ENCODE measurements at regions of chr15 and their contacts with region 1.

Region 1: DNA sequence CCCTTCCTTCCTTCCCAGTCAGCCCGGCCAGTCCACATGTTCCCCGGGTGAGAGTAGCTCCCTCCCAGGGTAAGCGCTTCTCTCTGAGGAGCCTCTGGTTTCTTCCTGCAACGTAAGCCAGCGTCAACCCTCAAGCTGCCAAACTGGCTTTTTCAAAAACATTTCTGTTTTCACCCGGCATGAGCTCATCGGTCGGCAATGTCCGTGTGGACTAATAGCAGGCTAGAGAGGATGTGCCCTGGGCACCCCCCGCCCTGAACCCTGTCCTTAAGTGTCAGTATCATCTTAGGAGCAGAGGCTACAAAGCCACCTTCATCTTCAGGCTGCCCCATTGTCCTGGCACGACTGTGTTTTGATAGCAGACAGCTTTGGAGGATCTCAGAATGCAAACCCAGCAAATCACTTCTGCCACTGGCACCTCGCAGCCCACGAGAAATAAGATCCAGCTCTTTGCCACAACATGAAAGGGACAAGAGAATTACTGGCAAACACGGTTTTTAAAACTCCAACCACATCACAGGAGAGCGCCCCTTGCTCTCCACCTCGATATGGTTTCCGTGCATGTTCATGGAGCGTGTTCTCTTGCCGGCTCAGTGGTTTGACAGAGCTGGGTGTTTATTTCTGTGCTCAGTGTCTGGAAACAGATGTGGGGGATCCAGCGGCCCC is 9.9 kb downstream of the ALDH1A3 start:
- DNase-seq: no peak
- H3K4me3 ChIP-seq: no peak overlapping the region
- H3K27ac ChIP-seq: no peak overlapping the region
- H3K4me1 ChIP-seq: peaks cover 0 to 7% (median 2%) of the 10 kb centered on the region in 4 experiments; a peak in 2 of 7 replicates
- H3K27me3 ChIP-seq: no peaks in the 10 kb centered on the region; a peak in 1 of 7 replicates
- CTCF ChIP-seq: no peak
- EP300 ChIP-seq: no peak
- POLR2A ChIP-seq: no peak
- RAD21 ChIP-seq: no peak

Region 2: GRCh38 chr15:100902436-100903167 is 13.1 kb after region 1 on chr15:
- CTCF ChIA-PET with region 1: interaction called, 10 read pairs
- POLR2A ChIA-PET with region 1: interaction called, 4 read pairs
- DNase-seq: no peak
- H3K4me3 ChIP-seq: no peak overlapping the region
- H3K27ac ChIP-seq: no peak overlapping the region
- H3K4me1 ChIP-seq: peaks cover 0 to 10% (median 3%) of the 10 kb centered on the region in 4 experiments; a peak in 5 of 7 replicates
- H3K27me3 ChIP-seq: no peaks in the 10 kb centered on the region
- CTCF ChIP-seq: no peak
- EP300 ChIP-seq: no peak
- POLR2A ChIP-seq: no peak
- RAD21 ChIP-seq: no peak

Region 3: DNA sequence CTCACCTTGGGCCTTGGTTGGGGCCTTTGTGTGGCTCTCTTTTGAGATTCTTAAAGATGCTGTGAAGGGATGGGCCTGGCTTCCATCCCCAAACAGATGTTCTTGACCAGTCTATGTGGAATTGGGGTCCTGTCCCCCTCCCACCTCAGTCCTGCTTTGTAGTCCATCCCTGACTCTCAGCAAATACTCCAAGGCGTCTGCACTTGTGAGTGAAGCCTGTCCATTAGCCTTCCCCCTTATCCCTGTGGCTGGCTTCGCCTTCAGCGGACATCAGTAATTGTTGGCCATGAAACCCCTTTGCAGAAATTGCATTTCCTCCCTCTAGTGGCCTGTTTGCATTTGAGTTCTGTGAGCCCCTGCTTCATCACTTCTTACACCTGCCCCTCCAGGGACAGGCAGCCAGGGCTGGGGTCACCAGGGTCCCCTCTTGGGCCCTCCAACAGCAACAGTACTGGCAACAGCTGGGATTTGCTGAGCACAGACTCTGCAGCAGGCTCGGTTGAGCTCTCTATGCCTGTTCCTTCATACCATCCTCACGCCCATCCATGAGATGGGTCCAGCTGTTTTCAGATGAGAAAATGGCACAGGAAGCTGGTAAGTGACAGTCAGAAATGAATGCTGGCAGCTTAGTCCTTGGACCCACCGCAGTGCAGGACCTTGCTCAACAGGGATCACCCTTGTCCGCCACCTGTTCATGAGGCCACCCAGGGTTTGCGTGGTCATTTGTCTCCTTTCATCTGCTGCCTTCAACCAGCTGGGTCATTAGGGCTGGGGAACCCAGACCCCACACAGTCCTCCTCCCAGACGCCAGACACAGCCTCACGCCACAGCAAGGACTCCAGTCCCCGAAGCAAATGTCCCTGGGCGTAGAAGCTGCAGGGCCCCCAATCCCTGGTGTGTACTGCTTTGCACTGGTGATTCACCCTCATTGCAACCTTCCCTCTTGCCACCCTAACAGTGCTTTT is 20.8 kb after region 1 on chr15:
- CTCF ChIA-PET with region 1: interaction called, 26 read pairs
- POLR2A ChIA-PET with region 1: interaction called, 3 read pairs
- DNase-seq: no peak
- H3K4me3 ChIP-seq: no peak overlapping the region
- H3K27ac ChIP-seq: 0 out of 2 replicates have a peak overlapping the region, but pooled peaks have one; percentile 31
- H3K4me1 ChIP-seq: no peaks in the 10 kb centered on the region; a peak in 2 of 7 replicates
- H3K27me3 ChIP-seq: no peaks in the 10 kb centered on the region; a peak in 2 of 7 replicates
- CTCF ChIP-seq: peak; percentile 12 to 48 (median 48)
- EP300 ChIP-seq: no peak
- POLR2A ChIP-seq: no peak
- RAD21 ChIP-seq: peak in 1 of 2 experiments; percentile 31; a peak in 2 of 4 replicates

Measured in H1 (cell line).